H1 (cell line): ENCODE measurements at regions of chr10 and their contacts with region 1.

Region 1: GRCh38 chr10:22583689-22584088 is 130.7 kb downstream of the PIP4K2A start:
- DNase-seq: peak in 1 of 2 experiments; percentile 37
- H3K4me3 ChIP-seq: no peak overlapping the region
- H3K27ac ChIP-seq: no peak overlapping the region
- H3K4me1 ChIP-seq: no peaks in the 10 kb centered on the region
- H3K27me3 ChIP-seq: no peaks in the 10 kb centered on the region
- CTCF ChIP-seq: peak in 1 of 3 experiments; percentile 9; a peak in 1 of 4 replicates
- EP300 ChIP-seq: no peak
- POLR2A ChIP-seq: no peak
- RAD21 ChIP-seq: 0 out of 4 replicates have a peak, but pooled peaks of 1 of the 2 experiments have one; percentile 1

Region 2: DNA sequence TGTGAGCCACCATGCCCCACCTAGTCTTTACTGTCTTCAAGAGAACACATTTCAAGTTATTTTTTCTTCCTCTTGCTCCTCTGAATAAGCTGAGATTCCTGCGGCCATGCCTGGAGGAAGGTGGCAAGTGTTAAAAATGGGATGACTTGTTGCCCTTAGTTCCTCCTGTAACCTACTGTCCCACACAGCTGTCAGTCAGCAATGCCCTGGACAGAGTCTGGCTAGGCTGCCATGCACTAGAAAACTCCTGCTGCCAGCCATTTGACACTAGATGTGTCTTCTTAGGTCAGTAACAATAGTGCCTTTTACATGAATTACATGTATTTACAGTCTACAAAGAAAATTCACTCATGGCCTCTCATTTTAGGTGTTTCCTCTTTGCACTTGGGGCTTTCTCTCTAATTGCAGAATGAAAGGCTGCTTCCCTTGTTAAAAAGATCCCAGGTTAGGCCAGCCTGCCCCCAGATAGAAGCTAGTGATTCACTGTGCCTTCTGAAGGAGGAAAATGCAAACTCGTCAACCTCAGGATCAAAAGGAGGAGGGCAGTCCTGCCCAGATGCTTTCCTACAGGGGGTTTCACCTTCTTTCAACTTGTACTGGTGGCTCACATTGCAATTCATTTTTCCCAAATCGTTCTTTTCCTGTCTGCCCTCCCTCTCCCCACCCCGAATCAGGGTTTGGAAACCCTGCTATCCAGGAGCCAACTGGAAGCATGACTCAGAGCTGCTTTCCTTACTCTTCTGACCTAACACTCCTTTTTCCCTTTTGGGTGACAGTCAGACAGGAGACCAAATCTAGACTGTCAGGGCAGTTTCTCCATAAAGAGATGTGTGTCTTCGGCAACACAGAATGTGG is 101.8 kb before region 1 on chr10:
- CTCF ChIA-PET with region 1: no interaction called
- POLR2A ChIA-PET with region 1: no interaction called
- DNase-seq: no peak
- H3K4me3 ChIP-seq: no peak overlapping the region
- H3K27ac ChIP-seq: no peak overlapping the region
- H3K4me1 ChIP-seq: peaks cover 0 to 6% (median 2%) of the 10 kb centered on the region in 4 experiments; a peak in 4 of 7 replicates
- H3K27me3 ChIP-seq: peaks cover 28 to 36% (median 35%) of the 10 kb centered on the region in 4 experiments
- CTCF ChIP-seq: no peak
- EP300 ChIP-seq: no peak
- POLR2A ChIP-seq: no peak
- RAD21 ChIP-seq: no peak

Region 3: GRCh38 chr10:22597138-22597537 is 13.4 kb after region 1 on chr10:
- CTCF ChIA-PET with region 1: interaction called, 20 read pairs
- POLR2A ChIA-PET with region 1: no interaction called
- DNase-seq: no peak
- H3K4me3 ChIP-seq: no peak overlapping the region
- H3K27ac ChIP-seq: no peak overlapping the region
- H3K4me1 ChIP-seq: peaks cover 0 to 8% (median 3%) of the 10 kb centered on the region in 4 experiments; a peak in 4 of 7 replicates
- H3K27me3 ChIP-seq: no peaks in the 10 kb centered on the region
- CTCF ChIP-seq: no peak
- EP300 ChIP-seq: no peak
- POLR2A ChIP-seq: no peak
- RAD21 ChIP-seq: no peak

Region 4: GRCh38 chr10:22682237-22683139 is 98.8 kb after region 1 on chr10:
- CTCF ChIA-PET with region 1: no interaction called
- POLR2A ChIA-PET with region 1: no interaction called
- DNase-seq: no peak
- H3K4me3 ChIP-seq: no peak overlapping the region
- H3K27ac ChIP-seq: no peak overlapping the region
- H3K4me1 ChIP-seq: peaks cover 8 to 26% (median 14%) of the 10 kb centered on the region in 4 experiments; a peak in 6 of 7 replicates
- H3K27me3 ChIP-seq: no peaks in the 10 kb centered on the region
- CTCF ChIP-seq: no peak
- EP300 ChIP-seq: no peak
- POLR2A ChIP-seq: no peak
- RAD21 ChIP-seq: no peak